CD4-positive, alpha-beta T cell (primary cell): ENCODE measurements at regions of chr4 and their contacts with region 1.

Region 1: DNA sequence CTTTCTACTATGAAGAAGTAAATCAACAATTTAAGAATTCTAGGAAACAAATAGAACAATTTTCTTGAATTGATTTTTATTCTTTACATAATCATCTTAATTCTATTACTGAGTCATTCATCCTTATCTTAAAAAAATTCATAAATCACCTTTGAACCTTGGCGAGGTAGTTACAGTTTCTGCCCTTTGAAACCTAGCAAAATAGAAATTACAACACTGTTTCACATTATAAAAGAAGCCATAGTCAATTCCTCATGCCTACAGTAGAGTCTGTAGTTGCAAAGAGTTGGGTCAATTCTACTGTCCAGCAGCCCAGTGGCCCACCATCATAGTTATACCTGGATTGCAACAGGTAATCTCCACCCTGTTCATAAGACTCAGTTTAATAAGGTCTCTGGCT is 7.3 kb downstream of the SMIM31 start:
- DNase-seq: no peak
- ATAC-seq: no peak
- H3K4me3 ChIP-seq: no peak overlapping the region
- H3K4me3 Mint-ChIP-seq: no peak overlapping the region
- H3K27ac ChIP-seq: no peak overlapping the region
- H3K27ac Mint-ChIP-seq: no peak overlapping the region
- H3K4me1 ChIP-seq: no peaks in the 10 kb centered on the region
- H3K4me1 Mint-ChIP-seq: no peaks in the 10 kb centered on the region
- H3K27me3 ChIP-seq: no peaks in the 10 kb centered on the region
- H3K27me3 Mint-ChIP-seq: peaks cover 43% of the 10 kb centered on the region
- CTCF ChIP-seq: no peak

Region 2: GRCh38 chr4:164058776-164059445 is 702.3 kb before region 1 on chr4:
- CTCF ChIA-PET with region 1: no interaction called
- POLR2A ChIA-PET with region 1: no interaction called
- intact Hi-C with region 1: no loop called
- DNase-seq: no peak
- ATAC-seq: no peak
- H3K4me3 ChIP-seq: no peak overlapping the region
- H3K4me3 Mint-ChIP-seq: no peak overlapping the region
- H3K27ac ChIP-seq: no peak overlapping the region
- H3K27ac Mint-ChIP-seq: no peak overlapping the region
- H3K4me1 ChIP-seq: no peaks in the 10 kb centered on the region
- H3K4me1 Mint-ChIP-seq: no peaks in the 10 kb centered on the region
- H3K27me3 ChIP-seq: no peaks in the 10 kb centered on the region
- H3K27me3 Mint-ChIP-seq: no peaks in the 10 kb centered on the region
- CTCF ChIP-seq: no peak

Region 3: GRCh38 chr4:164716901-164717300 is 44.3 kb before region 1 on chr4:
- CTCF ChIA-PET with region 1: no interaction called
- POLR2A ChIA-PET with region 1: no interaction called
- intact Hi-C with region 1: loop called in 1 of 2 experiments (anchors 1 kb)
- DNase-seq: no peak
- ATAC-seq: no peak
- H3K4me3 ChIP-seq: no peak overlapping the region
- H3K4me3 Mint-ChIP-seq: no peak overlapping the region
- H3K27ac ChIP-seq: no peak overlapping the region
- H3K27ac Mint-ChIP-seq: no peak overlapping the region
- H3K4me1 ChIP-seq: no peaks in the 10 kb centered on the region
- H3K4me1 Mint-ChIP-seq: no peaks in the 10 kb centered on the region
- H3K27me3 ChIP-seq: no peaks in the 10 kb centered on the region
- H3K27me3 Mint-ChIP-seq: peaks cover 5% of the 10 kb centered on the region
- CTCF ChIP-seq: no peak